A673 (cell line): ENCODE measurements at regions of chr1 and their contacts with region 1.

Region 1: GRCh38 chr1:114547076-114547475 is 34.3 kb downstream of the BCAS2 start:
- DNase-seq: no peak
- H3K4me3 ChIP-seq: no peak overlapping the region
- H3K27ac ChIP-seq: no peak overlapping the region
- H3K4me1 ChIP-seq: no peaks in the 10 kb centered on the region
- H3K27me3 ChIP-seq: no peaks in the 10 kb centered on the region
- CTCF ChIP-seq: no peak

Region 2: GRCh38 chr1:114490274-114490693 is 56.8 kb before region 1 on chr1:
- CTCF ChIA-PET with region 1: no interaction called
- POLR2A ChIA-PET with region 1: interaction called, 20 read pairs
- intact Hi-C with region 1: no loop called
- DNase-seq: peak; percentile 23
- H3K4me3 ChIP-seq: no peak overlapping the region
- H3K27ac ChIP-seq: no peak overlapping the region
- H3K4me1 ChIP-seq: peaks cover 9% of the 10 kb centered on the region
- H3K27me3 ChIP-seq: no peaks in the 10 kb centered on the region
- CTCF ChIP-seq: no peak

Region 3: DNA sequence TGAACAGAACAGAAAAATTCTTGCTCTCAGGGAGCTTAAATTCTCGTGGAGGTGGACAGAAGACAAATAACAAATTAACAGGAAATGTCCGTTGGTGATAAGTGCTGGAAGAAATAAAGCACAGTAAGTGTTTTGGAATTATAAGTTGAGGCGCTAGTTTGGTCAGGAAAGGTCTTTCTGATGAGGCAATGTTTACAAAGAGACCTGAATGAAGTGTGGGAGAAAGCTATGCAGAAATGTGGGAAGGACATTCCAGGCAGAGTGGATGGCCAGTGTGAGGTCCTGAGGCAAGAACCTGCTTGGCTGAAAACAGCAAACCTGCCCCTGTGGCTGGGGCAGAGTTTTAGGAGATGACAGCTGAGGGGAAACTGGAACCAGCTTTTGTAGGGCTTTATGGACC is 767.7 kb after region 1 on chr1:
- CTCF ChIA-PET with region 1: no interaction called
- POLR2A ChIA-PET with region 1: no interaction called
- intact Hi-C with region 1: no loop called
- DNase-seq: no peak
- H3K4me3 ChIP-seq: no peak overlapping the region
- H3K27ac ChIP-seq: no peak overlapping the region
- H3K4me1 ChIP-seq: peaks cover 23% of the 10 kb centered on the region
- H3K27me3 ChIP-seq: no peaks in the 10 kb centered on the region
- CTCF ChIP-seq: no peak